ENCODE measurements at regions of chr17 and their contacts with region 1.

Region 1: GRCh38 chr17:28763804-28764266 is 20.0 kb downstream of the TRAF4 start:
- DNase-seq: no peak
- H3K4me3 ChIP-seq: no peak overlapping the region
- H3K27me3 ChIP-seq: no peaks in the 10 kb centered on the region
- CTCF ChIP-seq: peak; percentile 77

Region 2: GRCh38 chr17:28726226-28727130 is 37.4 kb before region 1 on chr17 and contains the start of gene TLCD1:
- CTCF ChIA-PET with region 1: interaction called, 63 read pairs
- POLR2A ChIA-PET with region 1: no interaction called
- DNase-seq: peak; percentile 65
- H3K4me3 ChIP-seq: peak within 1 kb of the TSS; percentile 71
- H3K27me3 ChIP-seq: no peaks in the 10 kb centered on the region
- CTCF ChIP-seq: peak; percentile 99
- polyA plus RNA-seq, gene TLCD1: 9.4 and 9.8 TPM in 2 replicates

Region 3: DNA sequence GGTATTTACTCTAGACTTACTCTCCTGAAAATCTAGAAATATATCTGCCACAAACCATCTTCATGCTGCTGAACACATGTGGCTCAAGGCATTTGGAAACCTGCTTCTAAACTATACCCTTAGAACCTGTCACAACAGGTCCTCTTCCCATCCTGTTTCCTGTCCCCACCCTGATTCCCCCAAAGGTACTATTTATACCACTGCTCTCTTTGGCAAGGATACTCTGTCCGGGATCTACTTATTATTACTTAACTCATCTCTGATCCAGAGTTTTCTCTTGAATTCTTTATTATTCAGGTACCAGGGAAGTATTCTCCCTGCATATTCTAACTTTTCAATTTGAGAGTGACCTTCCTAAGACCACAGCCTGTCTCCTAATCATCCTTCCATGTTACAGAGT is 13.3 kb after region 1 on chr17:
- CTCF ChIA-PET with region 1: interaction called, 38 read pairs
- POLR2A ChIA-PET with region 1: no interaction called
- DNase-seq: no peak
- H3K4me3 ChIP-seq: no peak overlapping the region
- H3K27me3 ChIP-seq: no peaks in the 10 kb centered on the region
- CTCF ChIP-seq: no peak

Region 4: GRCh38 chr17:28849281-28849680 is 85.4 kb after region 1 on chr17:
- CTCF ChIA-PET with region 1: interaction called, 15 read pairs
- POLR2A ChIA-PET with region 1: no interaction called
- DNase-seq: no peak
- H3K4me3 ChIP-seq: no peak overlapping the region
- H3K27me3 ChIP-seq: no peaks in the 10 kb centered on the region
- CTCF ChIP-seq: 0 out of 2 replicates have a peak, but pooled peaks have one; percentile 6

Region 5: GRCh38 chr17:28878981-28879380 is 115.1 kb after region 1 on chr17:
- CTCF ChIA-PET with region 1: interaction called, 17 read pairs
- POLR2A ChIA-PET with region 1: no interaction called
- DNase-seq: no peak
- H3K4me3 ChIP-seq: no peak overlapping the region
- H3K27me3 ChIP-seq: no peaks in the 10 kb centered on the region
- CTCF ChIP-seq: peak; percentile 59

Region 6: GRCh38 chr17:28908640-28909167 is 144.9 kb after region 1 on chr17:
- CTCF ChIA-PET with region 1: interaction called, 22 read pairs
- POLR2A ChIA-PET with region 1: no interaction called
- DNase-seq: peak; percentile 40
- H3K4me3 ChIP-seq: no peak overlapping the region
- H3K27me3 ChIP-seq: no peaks in the 10 kb centered on the region
- CTCF ChIP-seq: no peak

Region 7: DNA sequence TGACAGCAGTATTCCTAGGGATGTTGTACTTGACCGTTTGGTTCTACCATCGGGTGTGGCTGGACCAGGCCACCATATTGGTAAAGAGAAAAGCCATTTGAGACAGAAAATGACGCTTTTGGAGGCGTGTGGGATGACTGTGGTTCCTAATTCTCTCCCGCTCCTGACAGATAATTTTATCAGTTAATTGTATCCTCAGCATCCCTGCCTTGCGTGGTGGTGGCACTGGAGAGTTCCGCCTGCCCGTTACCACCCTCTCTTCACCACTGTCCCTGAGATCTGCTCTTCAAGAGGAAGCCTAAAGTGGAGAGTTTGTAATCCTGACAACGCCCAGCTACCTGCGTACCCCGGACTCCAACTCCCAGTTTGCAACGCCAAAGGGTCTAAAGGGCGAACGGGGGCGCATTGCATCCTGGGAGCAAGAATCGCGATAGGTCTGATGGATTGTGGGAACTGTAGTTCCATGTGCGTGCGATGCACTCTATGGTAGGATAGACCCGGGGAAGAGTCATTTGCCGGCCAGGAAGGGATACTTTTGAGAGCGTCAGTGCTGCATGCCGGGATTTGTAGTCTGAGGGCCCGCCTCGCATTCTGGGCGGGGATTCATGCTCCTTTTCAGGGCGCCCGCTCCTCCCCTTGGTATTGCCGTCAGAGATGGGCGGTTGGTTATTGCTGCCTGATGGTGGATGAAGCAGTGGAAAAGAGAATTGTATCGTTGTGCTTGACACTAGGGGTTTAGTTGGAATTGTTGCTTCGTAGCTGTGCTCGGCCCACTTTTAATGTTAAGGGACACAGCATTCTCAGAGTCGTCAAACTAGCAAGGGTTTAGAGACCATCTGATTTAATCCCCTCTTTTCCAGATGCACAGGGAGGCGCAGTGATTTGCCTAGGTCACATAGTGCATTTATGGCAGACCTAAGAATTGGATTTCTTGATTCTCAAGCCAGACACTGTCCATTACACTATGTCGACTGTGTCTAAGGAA is 188.4 kb after region 1 on chr17:
- CTCF ChIA-PET with region 1: interaction called, 17 read pairs
- POLR2A ChIA-PET with region 1: no interaction called
- DNase-seq: peak; percentile 98
- H3K4me3 ChIP-seq: peak overlapping the region; percentile 49
- H3K27me3 ChIP-seq: no peaks in the 10 kb centered on the region
- CTCF ChIP-seq: no peak

Measured in BJ (cell line).